Posterior vena cava (tissue), 2 donors: ENCODE measurements at regions of chr10 and their contacts with region 1.

Region 1: DNA sequence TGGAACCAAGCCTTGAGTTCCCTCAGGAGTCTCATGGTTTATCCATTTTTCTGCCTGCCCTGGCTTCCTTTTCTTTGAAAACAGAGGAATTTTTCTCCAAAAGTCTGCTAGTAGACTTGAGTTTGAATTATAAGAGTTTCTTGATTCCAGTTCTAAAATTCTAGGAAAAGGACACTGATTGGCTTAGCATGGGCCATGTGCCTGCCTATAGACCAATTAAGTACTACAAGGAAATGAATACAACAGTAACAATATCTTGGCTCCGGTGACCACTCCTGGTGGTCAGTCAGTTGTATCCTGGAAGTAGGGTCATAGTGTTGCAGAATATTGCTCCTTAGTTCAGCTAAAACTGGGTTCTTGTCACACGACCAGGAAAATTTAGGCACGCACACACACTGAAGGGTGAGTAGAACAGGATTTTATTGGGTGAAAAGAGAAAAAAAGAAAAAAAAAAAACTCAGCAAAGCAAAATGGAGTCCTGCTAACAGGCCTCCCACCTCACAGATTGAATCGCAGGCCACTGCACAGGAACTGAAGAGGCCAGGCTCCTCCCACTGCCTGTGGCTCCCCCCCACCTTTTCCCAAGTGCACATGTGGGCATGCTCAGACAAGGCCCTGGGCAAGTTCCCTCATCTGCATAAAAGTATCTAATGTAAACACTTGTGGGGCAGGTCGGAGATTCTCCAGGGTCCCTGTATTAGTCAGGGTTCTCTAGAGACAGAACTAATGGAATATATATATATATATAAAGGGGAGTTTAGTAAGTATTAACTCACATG is 155.1 kb downstream of the LYZL1 start:
- DNase-seq: no peak

Region 2: GRCh38 chr10:29386342-29386999 is 57.5 kb before region 1 on chr10:
- intact Hi-C with region 1: loop called (anchors 5 to 10 kb)
- DNase-seq: no peak

Region 3: DNA sequence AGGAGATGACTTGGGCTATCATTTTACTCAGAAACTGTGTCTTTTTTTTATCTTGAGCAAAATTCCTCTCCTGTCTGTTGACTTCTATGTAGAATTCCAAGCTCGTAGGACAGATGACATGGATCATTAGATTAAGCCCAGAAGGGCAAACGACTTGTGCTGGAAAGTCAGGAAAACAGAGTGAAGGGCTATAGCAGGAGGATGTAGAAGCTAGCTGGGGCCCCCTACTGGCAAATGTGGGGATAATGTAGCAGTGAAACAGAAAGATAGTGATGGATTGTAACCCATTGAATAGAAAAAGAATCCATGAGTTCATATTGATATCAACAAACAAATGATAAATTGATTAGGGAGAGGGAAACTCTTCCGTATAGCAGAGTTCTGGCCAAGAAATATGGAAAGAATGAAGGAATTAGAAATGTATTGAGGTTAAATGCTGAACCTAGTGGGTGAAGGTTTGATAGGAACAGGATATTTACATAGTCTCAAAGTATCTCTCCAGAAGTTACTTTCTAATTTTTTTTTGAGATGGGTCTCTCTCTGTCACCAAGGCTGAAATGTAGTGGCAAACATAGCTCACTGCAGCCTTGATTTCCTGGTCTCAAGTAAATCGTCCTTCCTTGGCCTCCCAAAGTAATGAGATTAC is 51.4 kb before region 1 on chr10:
- intact Hi-C with region 1: loop called (anchors 5 to 10 kb)
- DNase-seq: no peak